Activated T-helper 2 cell treated with anti-CD3 and anti-CD28 coated beads, Interferon-gamma antibody, Interleukin-2, Interleukin-4, amounts not matched to agents 10 μg/mL and 5 μg/mL and 100 μg/mL, durations not matched to agents 14 hours and 24 hours and 36 hours (primary cell): ENCODE measurements at regions of chrX and their contacts with region 1.

Region 1: DNA sequence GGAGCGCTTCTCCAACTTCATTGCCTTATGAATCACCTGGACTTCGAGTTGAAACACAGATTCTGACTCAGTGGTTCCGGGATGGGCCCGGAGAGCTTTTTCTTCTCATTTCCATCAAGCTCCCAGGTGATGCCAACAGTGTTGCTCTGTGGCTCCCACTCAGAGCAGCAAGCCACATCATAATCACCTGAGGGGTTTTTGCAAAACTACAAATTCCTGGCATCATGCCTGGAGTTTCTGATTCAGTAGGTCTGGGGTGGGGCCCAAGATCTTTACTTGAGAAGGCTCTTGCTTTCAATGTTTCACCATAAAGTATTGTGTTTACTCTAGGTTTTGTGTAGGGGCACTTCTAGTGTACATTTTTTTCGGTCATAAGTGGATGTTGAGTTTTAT is 7.0 kb downstream of the MTM1 start:
- DNase-seq: no peak
- H3K4me3 Mint-ChIP-seq: peak overlapping the region; percentile 72
- H3K27ac Mint-ChIP-seq: peak overlapping the region; percentile 94
- H3K4me1 Mint-ChIP-seq: peaks cover 71% of the 10 kb centered on the region
- H3K27me3 Mint-ChIP-seq: no peaks in the 10 kb centered on the region

Region 2: DNA sequence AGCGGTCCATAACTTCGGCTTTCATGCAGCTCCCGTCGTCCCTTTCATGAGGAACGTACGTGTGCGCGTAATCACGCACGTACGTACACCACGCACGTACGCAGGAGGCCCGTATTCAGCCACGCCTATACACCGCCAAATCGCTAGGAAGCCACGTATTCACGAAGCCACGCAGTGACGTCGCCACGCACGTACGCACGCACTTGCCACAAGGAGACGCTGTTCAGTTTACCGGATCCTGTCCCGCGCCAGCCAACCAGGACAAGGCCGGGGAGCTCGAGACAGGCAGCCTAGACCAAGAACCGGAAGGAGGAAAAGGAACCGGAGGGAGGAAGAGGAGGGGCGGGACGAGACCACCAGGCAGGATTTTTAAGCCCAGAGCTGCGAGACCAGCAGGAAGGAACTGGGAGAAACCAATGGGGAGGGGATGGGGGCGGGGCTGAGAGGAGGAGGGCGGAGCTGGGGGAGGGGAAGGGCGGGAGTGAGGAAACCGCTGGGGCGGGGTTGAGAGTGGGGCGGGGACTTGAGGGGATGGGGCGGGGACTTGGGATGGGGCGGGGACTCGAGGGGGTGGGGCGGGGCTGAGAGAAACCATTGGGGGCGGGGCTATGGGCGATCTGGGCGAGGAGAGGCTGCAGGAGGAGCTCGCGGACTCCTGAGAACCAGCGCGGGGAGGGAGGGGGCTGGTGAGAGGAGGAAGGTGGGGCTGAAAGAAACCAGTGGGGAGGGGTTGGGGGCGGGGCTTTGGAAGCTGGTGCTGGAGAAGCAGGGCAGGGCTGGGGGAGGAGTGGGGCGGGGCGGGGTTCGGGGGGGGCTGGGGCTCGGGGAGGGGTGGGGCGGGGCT is 636.8 kb before region 1 on chrX and contains the start of gene EOLA2:
- intact Hi-C with region 1: loop called (anchors 10 kb)
- DNase-seq: peak; percentile 90
- H3K4me3 Mint-ChIP-seq: peak within 1 kb of the TSS; percentile 86
- H3K27ac Mint-ChIP-seq: peak within 1 kb of the TSS; percentile 99
- H3K4me1 Mint-ChIP-seq: peaks cover 1% of the 10 kb centered on the region
- H3K27me3 Mint-ChIP-seq: no peaks in the 10 kb centered on the region
- total RNA-seq, gene EOLA2: 45.1 and 45.2 TPM in 2 replicates

Region 3: GRCh38 chrX:150365051-150365989 is 210.1 kb before region 1 on chrX:
- intact Hi-C with region 1: loop called (anchors 5 kb)
- DNase-seq: peak; percentile 62
- H3K4me3 Mint-ChIP-seq: peak overlapping the region; percentile 76
- H3K27ac Mint-ChIP-seq: peak overlapping the region; percentile 84
- H3K4me1 Mint-ChIP-seq: peaks cover 23% of the 10 kb centered on the region
- H3K27me3 Mint-ChIP-seq: peaks cover 15% of the 10 kb centered on the region

Region 4: DNA sequence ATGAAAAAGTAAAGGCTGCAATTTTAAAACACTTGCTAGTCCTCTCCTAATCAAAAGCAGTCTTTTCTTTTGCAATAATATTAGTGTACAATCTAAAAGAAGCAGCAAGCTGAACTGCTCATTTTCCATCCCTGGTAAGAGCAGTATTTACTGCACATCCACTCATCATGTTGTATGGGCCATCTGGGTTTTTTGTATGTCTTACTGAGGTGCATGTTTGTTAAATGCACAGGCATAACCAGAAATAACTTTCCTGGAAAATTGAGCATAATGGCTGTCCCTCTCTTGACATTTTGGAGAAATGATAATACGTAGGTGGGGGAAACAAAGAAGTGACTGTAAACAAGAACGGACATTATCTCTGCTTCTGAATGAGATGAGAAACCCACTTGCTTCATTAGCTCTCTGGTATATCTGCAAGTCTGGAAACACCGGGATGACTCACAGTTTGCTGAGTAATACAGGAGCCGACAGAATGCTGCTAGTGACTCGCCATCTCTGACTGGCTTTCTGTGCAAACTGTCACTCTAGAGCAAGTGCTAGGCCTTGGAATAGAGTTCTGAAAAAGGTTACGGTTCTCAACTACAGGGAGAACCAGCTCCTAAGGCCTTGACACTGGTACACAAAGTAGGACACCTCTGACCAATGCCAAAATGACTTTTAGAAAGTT is 92.7 kb before region 1 on chrX:
- intact Hi-C with region 1: loop called (anchors 1 kb)
- DNase-seq: peak; percentile 30
- H3K4me3 Mint-ChIP-seq: peak overlapping the region; percentile 75
- H3K27ac Mint-ChIP-seq: peak overlapping the region; percentile 99
- H3K4me1 Mint-ChIP-seq: peaks cover 55% of the 10 kb centered on the region
- H3K27me3 Mint-ChIP-seq: no peaks in the 10 kb centered on the region

Region 5: GRCh38 chrX:150693775-150694574 is 118.6 kb after region 1 on chrX:
- intact Hi-C with region 1: loop called (anchors 2 kb)
- DNase-seq: peak; percentile 63
- H3K4me3 Mint-ChIP-seq: peak overlapping the region; percentile 84
- H3K27ac Mint-ChIP-seq: peak overlapping the region; percentile 92
- H3K4me1 Mint-ChIP-seq: peaks cover 52% of the 10 kb centered on the region
- H3K27me3 Mint-ChIP-seq: no peaks in the 10 kb centered on the region